ENCODE measurements at regions of chr17 and their contacts with region 1.

Region 1: DNA sequence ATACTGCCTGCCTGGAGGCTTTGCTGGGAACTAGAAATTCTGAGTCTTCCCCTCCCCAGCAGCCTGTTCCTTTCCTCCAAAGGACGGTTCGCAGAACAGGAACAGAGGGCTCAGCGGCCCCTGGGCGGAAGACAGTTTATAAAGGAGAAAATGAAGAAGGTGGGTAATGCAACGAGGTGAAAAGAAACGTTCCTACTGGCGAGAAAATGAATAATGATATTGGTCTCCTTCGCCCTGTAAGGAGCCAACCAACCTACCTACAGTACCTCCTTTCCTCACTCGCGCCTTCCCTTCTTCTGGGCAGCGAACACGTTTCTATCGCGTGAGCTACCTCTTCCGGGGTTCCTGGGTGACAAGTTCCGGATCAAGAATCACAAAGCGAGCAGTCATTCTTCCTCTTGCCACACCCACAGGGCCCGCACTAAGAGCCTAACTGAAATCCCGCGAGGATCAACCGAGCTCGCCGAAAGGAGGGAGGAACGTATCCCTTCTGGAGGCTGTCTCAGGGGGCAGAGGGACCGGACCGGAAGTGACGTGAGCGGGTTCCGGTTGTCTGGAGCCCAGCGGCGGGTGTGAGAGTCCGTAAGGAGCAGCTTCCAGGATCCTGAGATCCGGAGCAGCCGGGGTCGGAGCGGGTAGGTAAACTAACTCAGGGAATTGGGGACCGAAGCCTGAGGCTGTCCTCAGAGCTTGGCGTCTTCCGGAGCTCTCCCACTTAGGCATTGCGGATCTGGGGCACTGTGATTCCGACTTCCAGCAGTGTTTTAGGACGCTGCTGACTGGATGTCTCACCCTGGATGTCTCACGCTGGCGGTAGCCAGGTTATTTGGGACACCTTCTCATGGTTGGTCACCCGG is at the starts of genes PTRH2 and VMP1:
- DNase-seq: peak; percentile 72 to 94 (median 83)
- ATAC-seq: peak; percentile 96
- H3K4me3 ChIP-seq: peak within 1 kb of the TSS; percentile 90
- H3K4me3 Mint-ChIP-seq: peak within 1 kb of the TSS; percentile 97 to 100 (median 99)
- H3K27ac ChIP-seq: peak within 1 kb of the TSS; percentile 90
- H3K27ac Mint-ChIP-seq: peak within 1 kb of the TSS; percentile 96 to 100 (median 99)
- H3K4me1 ChIP-seq: peaks cover 26 to 28% of the 10 kb centered on the region in 2 donors
- H3K4me1 Mint-ChIP-seq: peaks cover 39 to 86% (median 68%) of the 10 kb centered on the region in 7 donors
- H3K27me3 ChIP-seq: no peaks in the 10 kb centered on the region
- H3K27me3 Mint-ChIP-seq: no peaks in the 10 kb centered on the region
- total RNA-seq, gene PTRH2: 6.1 to 24.1 (median 15.0) TPM
- total RNA-seq, gene VMP1: 70.3 to 370 (median 82.5) TPM

Region 2: DNA sequence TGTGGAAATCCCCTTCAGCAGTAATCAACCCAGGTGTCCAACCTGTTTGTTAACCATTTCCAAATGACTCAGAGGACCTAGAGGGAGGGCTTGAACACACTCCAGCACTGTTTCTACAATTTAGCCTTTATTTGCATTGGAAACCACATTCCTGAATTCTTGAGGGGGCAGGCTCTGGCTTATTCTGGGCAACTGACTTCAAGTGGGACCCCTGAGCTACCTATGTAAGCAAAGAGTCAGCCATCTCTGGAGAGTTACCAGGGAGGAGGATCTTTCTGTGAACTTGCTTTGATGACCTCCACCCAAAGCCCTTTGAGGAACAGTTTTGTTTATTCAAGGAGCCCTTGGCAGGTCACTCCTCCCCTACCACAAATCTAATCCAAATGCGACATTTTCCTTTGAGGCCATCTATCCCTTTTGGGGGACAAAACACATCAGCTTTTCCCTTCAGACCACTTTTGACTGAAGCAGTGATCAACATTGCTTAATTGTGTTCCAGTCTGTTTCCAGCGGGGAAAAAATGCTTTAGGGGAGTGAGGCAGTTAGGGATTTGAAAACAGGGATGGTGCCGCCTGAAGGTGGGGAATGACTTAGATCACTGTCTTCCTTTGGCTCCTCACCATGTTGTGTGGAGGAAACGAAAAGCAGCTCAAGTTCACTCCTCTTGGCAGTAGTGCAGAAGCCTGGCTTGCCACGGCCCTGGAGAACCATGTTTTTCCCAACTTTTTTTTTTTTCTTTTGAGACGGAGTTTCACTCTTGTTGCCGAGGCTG is 139.2 kb after region 1 on chr17:
- CTCF ChIA-PET with region 1: no interaction called
- POLR2A ChIA-PET with region 1: interaction called, 3 read pairs
- intact Hi-C with region 1: loop called in 1 of 2 experiments (anchors 5 kb)
- DNase-seq: peak in 1 of 9 donors; percentile 34
- ATAC-seq: peak; percentile 58
- H3K4me3 ChIP-seq: no peak overlapping the region
- H3K4me3 Mint-ChIP-seq: peak overlapping the region in 6 of 10 donors; percentile 4 to 76 (median 25)
- H3K27ac ChIP-seq: peak overlapping the region; percentile 60
- H3K27ac Mint-ChIP-seq: peak overlapping the region in 8 of 9 donors; percentile 7 to 91 (median 65)
- H3K4me1 ChIP-seq: peaks cover 16 to 19% of the 10 kb centered on the region in 2 donors
- H3K4me1 Mint-ChIP-seq: peaks cover 23 to 65% (median 49%) of the 10 kb centered on the region in 7 donors
- H3K27me3 ChIP-seq: no peaks in the 10 kb centered on the region
- H3K27me3 Mint-ChIP-seq: peaks cover 0 to 3% (median 0%) of the 10 kb centered on the region in 5 donors

Region 3: GRCh38 chr17:59964482-59965328 is 257.4 kb after region 1 on chr17 and contains the start of gene RNFT1:
- CTCF ChIA-PET with region 1: no interaction called
- POLR2A ChIA-PET with region 1: no interaction called
- intact Hi-C with region 1: loop called in 1 of 2 experiments (anchors 1 kb)
- DNase-seq: peak; percentile 78 to 97 (median 88)
- ATAC-seq: peak; percentile 97
- H3K4me3 ChIP-seq: peak within 1 kb of the TSS; percentile 92
- H3K4me3 Mint-ChIP-seq: peak within 1 kb of the TSS; percentile 86 to 99 (median 94)
- H3K27ac ChIP-seq: peak within 1 kb of the TSS; percentile 84
- H3K27ac Mint-ChIP-seq: peak within 1 kb of the TSS; percentile 88 to 99 (median 94)
- H3K4me1 ChIP-seq: peaks cover 16 to 18% of the 10 kb centered on the region in 2 donors
- H3K4me1 Mint-ChIP-seq: peaks cover 16 to 32% (median 23%) of the 10 kb centered on the region in 7 donors
- H3K27me3 ChIP-seq: no peaks in the 10 kb centered on the region
- H3K27me3 Mint-ChIP-seq: peaks cover 0 to 5% (median 0%) of the 10 kb centered on the region in 5 donors
- total RNA-seq, gene RNFT1: 22.8 to 45.8 (median 33.1) TPM

Region 4: DNA sequence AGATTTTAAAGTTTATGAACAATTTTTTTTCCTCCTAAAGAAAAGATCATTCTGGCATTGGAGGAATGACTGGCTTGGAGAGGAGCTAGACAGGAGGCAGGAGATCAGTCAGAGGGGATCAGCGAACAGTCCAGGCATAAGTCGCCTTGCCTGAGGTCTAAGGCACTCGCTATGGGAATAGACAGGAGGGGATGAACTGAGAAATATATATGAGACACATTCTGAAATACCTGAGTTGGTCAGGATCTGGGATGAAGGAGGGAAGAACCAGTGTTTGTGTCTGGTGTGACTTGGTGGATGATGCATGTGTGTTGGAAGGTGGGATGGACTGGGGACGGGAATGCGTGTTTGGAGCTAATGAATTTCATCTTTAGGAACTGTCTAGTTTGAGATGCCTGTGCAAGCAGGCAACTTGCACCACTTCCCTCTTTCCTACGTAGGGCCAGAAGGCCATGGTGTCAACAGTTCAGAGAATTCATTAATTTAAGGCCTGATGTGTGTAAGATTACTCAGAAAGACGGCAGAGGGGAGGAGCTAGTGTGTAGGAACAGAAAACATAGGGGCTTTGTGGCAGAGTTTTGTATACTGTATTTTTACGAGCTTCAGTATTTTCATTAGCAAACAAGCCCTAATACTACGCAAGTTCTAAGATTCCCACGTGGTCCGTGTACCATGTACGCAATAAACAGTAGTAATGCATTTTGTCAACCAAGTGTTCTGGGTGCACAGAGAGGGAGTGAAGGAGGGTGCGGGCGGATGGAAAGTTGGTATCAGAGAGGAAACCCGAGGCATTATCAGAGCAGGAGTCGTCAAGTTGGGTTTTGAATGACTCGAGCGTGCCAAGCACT is 370.6 kb after region 1 on chr17:
- CTCF ChIA-PET with region 1: interaction called, 3 read pairs
- POLR2A ChIA-PET with region 1: no interaction called
- intact Hi-C with region 1: loop called (anchors 1 kb)
- DNase-seq: peak in 5 of 9 donors; percentile 30 to 41 (median 35)
- ATAC-seq: peak; percentile 66
- H3K4me3 ChIP-seq: peak overlapping the region; percentile 82
- H3K4me3 Mint-ChIP-seq: peak overlapping the region; percentile 86 to 97 (median 94)
- H3K27ac ChIP-seq: peak overlapping the region; percentile 70
- H3K27ac Mint-ChIP-seq: peak overlapping the region; percentile 82 to 97 (median 87)
- H3K4me1 ChIP-seq: peaks cover 8 to 14% of the 10 kb centered on the region in 2 donors
- H3K4me1 Mint-ChIP-seq: peaks cover 17 to 41% (median 28%) of the 10 kb centered on the region in 7 donors
- H3K27me3 ChIP-seq: no peaks in the 10 kb centered on the region
- H3K27me3 Mint-ChIP-seq: no peaks in the 10 kb centered on the region

Measured in naive thymus-derived CD4-positive, alpha-beta T cell (primary cell).